Activated CD8-positive, alpha-beta T cell treated with anti-CD3 and anti-CD28 coated beads, Interleukin-2, amount 10 ng/mL, durations not matched to agents 7 days and 5 days (primary cell): ENCODE measurements at regions of chr3 and their contacts with region 1.

Region 1: GRCh38 chr3:32667122-32667521 is 17.9 kb upstream of the CNOT10 start:
- DNase-seq: no peak
- ATAC-seq: no peak
- H3K4me3 Mint-ChIP-seq: no peak overlapping the region
- H3K27ac Mint-ChIP-seq: no peak overlapping the region
- H3K4me1 Mint-ChIP-seq: no peaks in the 10 kb centered on the region
- H3K27me3 Mint-ChIP-seq: peaks cover 17% of the 10 kb centered on the region

Region 2: DNA sequence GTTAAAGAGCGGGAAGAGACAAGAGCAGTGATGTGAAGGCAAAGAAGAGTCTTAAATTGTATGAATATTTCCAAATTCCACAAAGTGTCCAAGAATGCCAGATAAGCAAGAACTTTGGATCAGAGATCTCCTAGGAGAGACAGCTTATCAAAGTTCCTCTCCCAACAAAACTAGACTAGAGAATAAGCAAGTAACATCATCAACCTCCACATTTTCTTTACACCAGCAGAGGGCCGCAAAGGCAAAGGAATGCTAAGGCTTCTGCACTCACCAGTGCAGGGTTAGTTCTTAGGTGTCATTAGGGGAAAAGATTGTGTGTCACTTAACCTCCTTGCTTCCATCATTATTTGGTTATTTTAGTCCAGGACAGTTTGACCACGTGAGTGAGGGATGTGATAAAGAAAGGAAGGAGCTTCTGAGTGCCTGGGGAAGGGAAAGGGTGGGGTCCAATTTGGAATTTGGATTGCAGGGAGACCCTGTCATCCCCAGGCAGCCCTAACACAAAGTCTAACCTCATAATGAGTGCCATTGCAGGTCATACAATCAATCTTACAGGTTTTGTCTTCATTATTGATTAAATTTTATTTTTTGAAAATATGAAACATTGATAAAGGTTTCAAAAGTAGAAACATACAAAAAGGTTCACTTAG is 156.9 kb before region 1 on chr3:
- CTCF ChIA-PET with region 1: interaction called, 12 read pairs
- POLR2A ChIA-PET with region 1: no interaction called
- DNase-seq: peak; percentile 77
- ATAC-seq: peak; percentile 92
- H3K4me3 Mint-ChIP-seq: no peak overlapping the region
- H3K27ac Mint-ChIP-seq: no peak overlapping the region
- H3K4me1 Mint-ChIP-seq: no peaks in the 10 kb centered on the region
- H3K27me3 Mint-ChIP-seq: peaks cover under 1% of the 10 kb centered on the region